Naive thymus-derived CD4-positive, alpha-beta T cell (primary cell): ENCODE measurements at regions of chr15 and their contacts with region 1.

Region 1: GRCh38 chr15:55789066-55789660 is 46.2 kb upstream of the PRTG start:
- DNase-seq: peak in 5 of 9 donors; percentile 3 to 61 (median 21)
- ATAC-seq: no peak
- H3K4me3 ChIP-seq: no peak overlapping the region
- H3K4me3 Mint-ChIP-seq: no peak overlapping the region
- H3K27ac ChIP-seq: no peak overlapping the region
- H3K27ac Mint-ChIP-seq: no peak overlapping the region
- H3K4me1 ChIP-seq: no peaks in the 10 kb centered on the region
- H3K4me1 Mint-ChIP-seq: no peaks in the 10 kb centered on the region
- H3K27me3 ChIP-seq: no peaks in the 10 kb centered on the region
- H3K27me3 Mint-ChIP-seq: peaks cover 3 to 19% (median 12%) of the 10 kb centered on the region in 5 donors

Region 2: GRCh38 chr15:55552926-55553325 is 236.2 kb before region 1 on chr15:
- CTCF ChIA-PET with region 1: no interaction called
- POLR2A ChIA-PET with region 1: no interaction called
- intact Hi-C with region 1: no loop called
- DNase-seq: no peak
- ATAC-seq: no peak
- H3K4me3 ChIP-seq: no peak overlapping the region
- H3K4me3 Mint-ChIP-seq: no peak overlapping the region
- H3K27ac ChIP-seq: no peak overlapping the region
- H3K27ac Mint-ChIP-seq: no peak overlapping the region
- H3K4me1 ChIP-seq: no peaks in the 10 kb centered on the region
- H3K4me1 Mint-ChIP-seq: no peaks in the 10 kb centered on the region
- H3K27me3 ChIP-seq: no peaks in the 10 kb centered on the region
- H3K27me3 Mint-ChIP-seq: peaks cover 0 to 48% (median 29%) of the 10 kb centered on the region in 5 donors

Region 3: DNA sequence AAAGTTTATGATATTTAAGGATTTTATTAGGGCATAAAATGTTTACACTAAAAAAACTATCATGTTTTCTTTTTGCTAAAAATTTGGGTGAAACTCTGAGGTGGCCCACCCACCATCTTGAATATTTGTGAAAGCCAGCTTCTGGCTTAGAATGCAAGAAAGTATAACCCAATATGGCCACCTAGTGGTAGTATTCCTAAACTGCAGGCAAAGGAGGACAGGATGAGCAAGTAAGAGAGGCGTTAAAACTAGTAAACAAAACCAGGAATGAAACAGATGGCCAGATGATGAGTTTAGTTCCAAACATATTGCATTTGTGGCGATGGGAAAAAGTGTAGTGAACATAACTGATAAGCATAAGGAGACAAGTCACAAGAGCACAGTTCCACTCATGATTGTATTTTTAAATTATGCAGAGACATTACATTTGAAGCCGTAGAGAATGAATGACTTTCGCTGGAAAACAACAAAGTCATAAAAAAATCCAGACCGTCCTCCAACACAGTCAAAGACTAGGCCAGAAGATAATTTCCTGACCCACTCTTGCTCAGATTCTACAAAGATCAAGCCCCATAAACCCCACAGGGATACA is 57.0 kb after region 1 on chr15:
- CTCF ChIA-PET with region 1: no interaction called
- POLR2A ChIA-PET with region 1: no interaction called
- intact Hi-C with region 1: loop called in 1 of 2 experiments (anchors 1 kb)
- DNase-seq: peak in 8 of 9 donors; percentile 19 to 65 (median 52)
- ATAC-seq: peak; percentile 75
- H3K4me3 ChIP-seq: no peak overlapping the region
- H3K4me3 Mint-ChIP-seq: no peak overlapping the region
- H3K27ac ChIP-seq: no peak overlapping the region
- H3K27ac Mint-ChIP-seq: no peak overlapping the region
- H3K4me1 ChIP-seq: no peaks in the 10 kb centered on the region
- H3K4me1 Mint-ChIP-seq: peaks cover 0 to 3% (median 0%) of the 10 kb centered on the region in 7 donors
- H3K27me3 ChIP-seq: no peaks in the 10 kb centered on the region
- H3K27me3 Mint-ChIP-seq: no peaks in the 10 kb centered on the region

Region 4: DNA sequence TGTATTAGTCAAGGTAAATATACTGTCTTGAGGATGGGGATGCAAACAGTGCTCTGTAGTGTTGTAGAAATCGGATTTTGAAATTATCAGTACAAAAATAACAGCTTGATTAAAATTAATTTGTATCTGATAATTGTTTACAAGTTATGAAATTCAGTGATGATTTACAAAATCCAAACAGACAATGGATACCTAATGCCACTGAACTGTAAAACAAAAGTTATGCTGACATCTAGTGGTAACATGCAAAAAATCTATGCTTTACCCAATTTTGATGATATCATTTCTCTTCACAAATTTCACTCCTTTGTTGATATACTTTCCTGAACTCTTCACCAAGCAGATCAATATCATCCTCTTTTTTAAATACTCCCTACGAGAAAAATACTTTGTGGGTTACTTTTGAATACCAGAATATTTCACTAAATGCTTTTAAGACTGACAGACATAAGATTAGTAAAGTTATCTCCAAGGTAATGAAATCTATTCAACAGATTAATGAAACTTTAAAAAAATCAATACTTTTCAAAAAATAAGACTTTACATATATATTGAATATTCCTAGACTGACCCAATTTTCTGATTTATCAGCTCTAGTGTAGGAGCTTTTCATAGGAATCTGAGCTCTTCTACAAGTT is 639.8 kb after region 1 on chr15:
- CTCF ChIA-PET with region 1: no interaction called
- POLR2A ChIA-PET with region 1: no interaction called
- intact Hi-C with region 1: loop called in 1 of 2 experiments (anchors 10 kb)
- DNase-seq: peak in 3 of 9 donors; percentile 4 to 15 (median 5)
- ATAC-seq: no peak
- H3K4me3 ChIP-seq: no peak overlapping the region
- H3K4me3 Mint-ChIP-seq: no peak overlapping the region
- H3K27ac ChIP-seq: no peak overlapping the region
- H3K27ac Mint-ChIP-seq: no peak overlapping the region
- H3K4me1 ChIP-seq: no peaks in the 10 kb centered on the region
- H3K4me1 Mint-ChIP-seq: no peaks in the 10 kb centered on the region
- H3K27me3 ChIP-seq: peaks cover 0 to 5% of the 10 kb centered on the region in 2 donors
- H3K27me3 Mint-ChIP-seq: peaks cover 0 to 20% (median 9%) of the 10 kb centered on the region in 5 donors